ENCODE measurements at regions of chr1 and their contacts with region 1.

Region 1: DNA sequence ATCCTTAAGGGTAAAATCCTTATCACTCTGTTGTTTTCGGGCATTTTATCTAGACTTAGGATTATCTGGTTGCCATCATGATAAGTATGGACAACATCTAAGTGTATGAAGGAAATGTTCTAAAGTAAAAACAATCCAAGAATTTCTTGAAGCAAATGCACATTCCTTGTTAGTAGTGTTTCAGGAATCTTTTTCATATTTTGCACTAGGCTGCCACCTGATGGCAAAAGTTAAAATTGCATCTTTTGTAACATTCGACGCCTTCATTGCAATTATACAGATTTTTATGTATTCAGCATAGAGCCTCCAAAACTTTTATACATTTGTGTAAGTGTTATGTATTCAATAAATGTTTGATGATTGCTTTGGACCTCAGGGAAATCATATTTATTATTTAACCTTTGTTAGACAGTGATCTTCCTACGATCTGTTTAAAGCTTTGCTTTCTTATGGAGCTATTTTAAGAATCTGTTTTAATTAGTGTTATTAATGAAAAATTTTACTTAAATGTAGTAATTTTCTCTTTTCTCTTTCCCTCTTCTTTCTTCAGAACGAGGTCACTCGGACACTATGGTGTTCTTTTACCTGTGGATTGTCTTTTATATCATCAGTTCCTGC is 49.4 kb upstream of the KIAA1614 start:
- DNase-seq: no peak

Region 2: GRCh38 chr1:180515864-180516388 is 347.3 kb before region 1 on chr1:
- intact Hi-C with region 1: loop called (anchors 5 kb)
- DNase-seq: no peak

Region 3: DNA sequence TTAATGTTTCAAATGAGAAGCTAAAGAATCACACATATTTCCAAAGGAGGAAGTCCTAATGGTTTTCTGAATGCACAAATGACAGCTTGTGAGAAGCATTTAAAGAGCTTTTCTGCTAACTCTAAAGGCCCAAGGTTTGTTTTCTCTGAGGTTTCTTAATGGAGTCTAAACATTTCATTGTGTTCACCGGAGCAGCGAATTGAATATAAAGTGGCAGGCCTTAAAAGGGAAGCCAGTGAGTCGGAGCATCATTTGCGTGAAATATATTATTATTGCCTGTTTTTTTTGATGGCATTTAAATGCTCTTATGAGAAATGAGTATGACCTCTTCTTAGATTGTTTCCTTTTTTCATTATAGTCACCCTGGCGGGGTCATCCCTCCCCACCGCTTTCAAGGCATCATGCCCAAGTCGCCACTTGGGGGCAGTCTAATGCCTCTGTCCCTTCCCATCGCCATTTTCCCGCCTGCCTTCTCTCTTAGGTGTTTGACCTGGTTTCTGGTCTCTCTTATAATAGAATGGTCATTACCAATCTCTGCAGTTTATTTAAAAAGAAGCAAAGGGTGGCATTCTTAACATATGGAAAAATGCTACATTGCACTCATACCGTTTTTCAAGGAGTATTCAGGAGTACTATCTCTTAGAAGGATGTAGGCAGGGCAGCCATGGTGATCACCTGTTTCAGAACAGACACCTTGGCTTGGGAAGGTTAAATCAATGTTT is 329.8 kb before region 1 on chr1:
- intact Hi-C with region 1: loop called (anchors 5 kb)
- DNase-seq: no peak